ENCODE measurements at regions of chr17 and their contacts with region 1.

Region 1: GRCh38 chr17:16215273-16215964 is at the start of gene NCOR1:
- DNase-seq: peak; percentile 93
- H3K4me3 ChIP-seq: peak within 1 kb of the TSS; percentile 78 to 97 (median 83)
- H3K27ac ChIP-seq: peak within 1 kb of the TSS; percentile 70
- H3K4me1 ChIP-seq: peaks cover 11% of the 10 kb centered on the region
- H3K27me3 ChIP-seq: no peaks in the 10 kb centered on the region
- CTCF ChIP-seq: peak in 1 of 2 donors; percentile 52
- total RNA-seq, gene NCOR1: 98.7 to 116 TPM

Region 2: DNA sequence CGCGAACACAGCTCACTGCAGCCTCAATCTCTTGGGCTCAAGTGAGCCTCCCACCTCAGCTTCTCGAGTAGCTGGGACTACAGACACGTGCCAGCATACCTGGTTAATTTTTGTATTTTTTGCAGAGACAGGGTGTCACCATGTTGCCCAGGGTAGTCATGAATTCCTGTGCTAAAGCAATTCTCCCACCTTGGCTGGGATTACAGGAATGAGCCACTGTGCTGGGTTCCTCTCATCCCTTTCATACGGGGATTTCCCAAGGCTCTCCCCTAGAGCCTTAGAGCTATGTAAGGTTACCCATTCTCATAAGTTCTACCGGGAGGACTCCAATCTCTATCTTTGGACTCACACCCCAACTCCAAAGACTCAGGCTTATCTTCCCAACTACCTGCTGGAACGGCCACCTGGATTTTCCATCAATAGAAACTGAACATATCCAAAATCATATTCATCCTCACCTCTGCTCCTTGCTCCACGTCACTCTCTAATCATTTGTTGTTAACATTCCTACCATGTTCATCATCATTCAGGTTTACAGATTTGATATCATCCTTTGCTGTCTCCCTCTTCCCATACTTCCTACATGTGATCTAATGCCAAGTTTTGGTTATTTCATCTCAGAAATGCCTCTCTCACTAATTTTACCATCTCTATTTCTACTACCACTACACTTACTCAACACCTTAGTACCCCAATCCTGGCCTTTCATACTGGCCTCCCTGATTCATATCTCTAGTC is 92.6 kb before region 1 on chr17:
- CTCF ChIA-PET with region 1: no interaction called
- dilution Hi-C with region 1: no loop called
- in situ Hi-C with region 1: no loop called
- intact Hi-C with region 1: loop called (anchors 2 kb)
- DNase-seq: peak; percentile 85
- H3K4me3 ChIP-seq: no peak overlapping the region
- H3K27ac ChIP-seq: peak overlapping the region; percentile 77
- H3K4me1 ChIP-seq: peaks cover 31% of the 10 kb centered on the region
- H3K27me3 ChIP-seq: no peaks in the 10 kb centered on the region
- CTCF ChIP-seq: no peak

Region 3: GRCh38 chr17:16158714-16159113 is 56.7 kb before region 1 on chr17:
- CTCF ChIA-PET with region 1: no interaction called
- dilution Hi-C with region 1: no loop called
- in situ Hi-C with region 1: no loop called
- intact Hi-C with region 1: no loop called
- DNase-seq: no peak
- H3K4me3 ChIP-seq: no peak overlapping the region
- H3K27ac ChIP-seq: no peak overlapping the region
- H3K4me1 ChIP-seq: no peaks in the 10 kb centered on the region
- H3K27me3 ChIP-seq: no peaks in the 10 kb centered on the region
- CTCF ChIP-seq: no peak

Region 4: GRCh38 chr17:16285957-16286640 is 70.7 kb after region 1 on chr17:
- CTCF ChIA-PET with region 1: no interaction called
- dilution Hi-C with region 1: no loop called
- in situ Hi-C with region 1: no loop called
- intact Hi-C with region 1: loop called (anchors 1 kb)
- DNase-seq: peak; percentile 93
- H3K4me3 ChIP-seq: peak overlapping the region in 2 of 3 experiments; percentile 11 to 35
- H3K27ac ChIP-seq: peak overlapping the region; percentile 75
- H3K4me1 ChIP-seq: peaks cover 54% of the 10 kb centered on the region
- H3K27me3 ChIP-seq: no peaks in the 10 kb centered on the region
- CTCF ChIP-seq: peak; percentile 36 to 41

Region 5: DNA sequence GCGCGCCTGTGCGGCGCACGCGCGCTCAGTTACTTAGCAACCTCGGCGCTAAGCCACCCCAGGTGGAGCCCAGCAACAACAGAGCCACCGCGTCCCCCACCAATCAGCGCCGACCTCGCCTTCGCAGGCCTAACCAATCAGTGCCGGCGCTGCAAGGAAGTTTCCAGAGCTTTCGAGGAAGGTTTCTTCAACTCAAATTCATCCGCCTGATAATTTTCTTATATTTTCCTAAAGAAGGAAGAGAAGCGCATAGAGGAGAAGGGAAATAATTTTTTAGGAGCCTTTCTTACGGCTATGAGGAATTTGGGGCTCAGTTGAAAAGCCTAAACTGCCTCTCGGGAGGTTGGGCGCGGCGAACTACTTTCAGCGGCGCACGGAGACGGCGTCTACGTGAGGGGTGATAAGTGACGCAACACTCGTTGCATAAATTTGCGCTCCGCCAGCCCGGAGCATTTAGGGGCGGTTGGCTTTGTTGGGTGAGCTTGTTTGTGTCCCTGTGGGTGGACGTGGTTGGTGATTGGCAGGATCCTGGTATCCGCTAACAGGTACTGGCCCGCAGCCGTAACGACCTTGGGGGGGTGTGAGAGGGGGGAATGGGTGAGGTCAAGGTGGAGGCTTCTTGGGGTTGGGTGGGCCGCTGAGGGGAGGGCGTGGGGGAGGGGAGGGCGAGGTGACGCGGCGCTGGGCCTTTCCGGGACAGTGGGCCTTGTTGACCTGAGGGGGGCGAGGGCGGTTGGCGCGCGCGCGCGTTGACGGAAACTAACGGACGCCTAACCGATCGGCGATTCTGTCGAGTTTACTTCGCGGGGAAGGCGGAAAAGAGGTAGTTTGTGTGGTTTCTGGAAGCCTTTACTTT is 165.4 kb after region 1 on chr17 and contains the start of gene UBB:
- CTCF ChIA-PET with region 1: interaction called, 13 read pairs
- dilution Hi-C with region 1: no loop called
- in situ Hi-C with region 1: no loop called
- intact Hi-C with region 1: no loop called
- DNase-seq: peak; percentile 97
- H3K4me3 ChIP-seq: peak within 1 kb of the TSS; percentile 64 to 78 (median 68)
- H3K27ac ChIP-seq: peak within 1 kb of the TSS; percentile 95
- H3K4me1 ChIP-seq: peaks cover 26% of the 10 kb centered on the region
- H3K27me3 ChIP-seq: no peaks in the 10 kb centered on the region
- CTCF ChIP-seq: no peak
- total RNA-seq, gene UBB: 633 to 696 TPM

Measured in mammary epithelial cell (primary cell).